Adrenal gland (tissue), 19 donors: ENCODE measurements at regions of chr7 and their contacts with region 1.

Region 1: DNA sequence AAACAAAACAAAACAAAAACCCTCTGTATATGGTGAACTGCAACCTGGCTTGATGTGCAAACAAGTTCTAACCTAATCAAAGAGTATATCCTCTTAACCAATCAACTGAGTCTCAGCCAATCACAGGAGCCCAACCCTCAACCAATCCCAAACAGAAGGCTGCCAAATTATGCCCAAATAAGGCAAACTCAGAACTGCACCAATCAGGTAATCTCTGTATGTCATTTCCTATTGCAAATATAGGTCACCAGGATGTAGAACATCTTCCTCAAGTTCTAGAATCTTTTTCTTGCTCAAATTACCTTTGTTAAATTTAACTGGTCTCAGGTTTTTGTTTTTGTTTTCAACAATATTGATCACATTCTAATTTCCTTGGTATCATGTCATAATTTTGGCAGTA is 5.2 kb downstream of the FAM133B start:
- DNase-seq: no peak
- H3K4me3 ChIP-seq: no peak overlapping the region
- H3K27ac ChIP-seq: no peak overlapping the region
- H3K4me1 ChIP-seq: peaks cover 22 to 41% of the 10 kb centered on the region in 2 donors
- H3K27me3 ChIP-seq: no peaks in the 10 kb centered on the region
- CTCF ChIP-seq: no peak
- POLR2A ChIP-seq: no peak

Region 2: GRCh38 chr7:91800389-91800788 is 784.6 kb before region 1 on chr7:
- intact Hi-C with region 1: no loop called
- DNase-seq: no peak
- H3K4me3 ChIP-seq: no peak overlapping the region
- H3K27ac ChIP-seq: no peak overlapping the region
- H3K4me1 ChIP-seq: no peaks in the 10 kb centered on the region
- H3K27me3 ChIP-seq: no peaks in the 10 kb centered on the region
- CTCF ChIP-seq: no peak
- POLR2A ChIP-seq: no peak

Region 3: DNA sequence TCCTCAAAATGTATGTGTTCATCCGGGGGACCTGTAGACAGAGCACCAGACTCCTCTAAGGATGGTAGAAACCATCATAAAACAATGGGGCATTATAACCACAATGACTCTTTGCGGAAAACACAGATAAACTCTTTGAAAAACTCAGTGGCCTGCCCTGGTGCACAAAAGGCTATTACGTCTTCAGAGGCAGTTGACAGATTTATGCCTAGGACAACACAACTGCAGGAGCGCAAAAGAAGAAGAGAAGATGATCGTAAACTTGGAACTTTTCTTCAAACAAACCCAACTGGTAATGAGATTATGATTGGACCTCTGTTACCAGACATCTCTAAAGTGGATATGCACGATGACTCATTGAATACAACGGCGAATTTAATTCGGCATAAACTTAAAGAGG is 50.4 kb before region 1 on chr7:
- intact Hi-C with region 1: loop called in 1 of 2 experiments (anchors 10 kb)
- DNase-seq: no peak
- H3K4me3 ChIP-seq: no peak overlapping the region
- H3K27ac ChIP-seq: no peak overlapping the region
- H3K4me1 ChIP-seq: peaks cover 0 to 11% of the 10 kb centered on the region in 2 donors
- H3K27me3 ChIP-seq: no peaks in the 10 kb centered on the region
- CTCF ChIP-seq: no peak
- POLR2A ChIP-seq: no peak